ENCODE measurements at regions of chr5 and their contacts with region 1.

Region 1: DNA sequence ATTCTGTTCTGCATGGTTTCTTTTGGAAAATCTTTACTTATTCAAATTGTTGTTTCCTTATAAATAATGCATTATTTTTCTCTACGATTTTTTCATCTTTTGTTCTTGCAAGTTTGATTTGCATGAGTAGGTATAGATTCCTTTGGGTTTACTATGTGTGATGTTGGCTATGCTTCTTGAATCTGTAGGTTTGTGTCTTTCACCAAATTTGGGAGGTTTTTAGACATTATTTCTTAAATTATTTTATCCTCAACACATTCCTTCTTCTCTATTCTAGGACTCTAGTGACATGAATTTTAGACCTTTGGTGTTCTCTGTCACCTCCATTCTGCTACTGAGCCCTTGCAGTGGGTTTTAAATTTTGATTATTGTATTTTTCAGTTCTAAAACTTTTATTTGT is 219.0 kb downstream of the CWC27 start:
- DNase-seq: no peak
- ATAC-seq: no peak
- H3K4me3 ChIP-seq: no peak overlapping the region
- H3K4me3 Mint-ChIP-seq: no peak overlapping the region
- H3K27ac ChIP-seq: no peak overlapping the region
- H3K27ac Mint-ChIP-seq: no peak overlapping the region
- H3K4me1 ChIP-seq: peaks cover 0 to 3% of the 10 kb centered on the region in 2 experiments
- H3K4me1 Mint-ChIP-seq: peaks cover 0 to 9% (median 7%) of the 10 kb centered on the region in 3 donors
- H3K27me3 ChIP-seq: no peaks in the 10 kb centered on the region
- H3K27me3 Mint-ChIP-seq: no peaks in the 10 kb centered on the region

Region 2: DNA sequence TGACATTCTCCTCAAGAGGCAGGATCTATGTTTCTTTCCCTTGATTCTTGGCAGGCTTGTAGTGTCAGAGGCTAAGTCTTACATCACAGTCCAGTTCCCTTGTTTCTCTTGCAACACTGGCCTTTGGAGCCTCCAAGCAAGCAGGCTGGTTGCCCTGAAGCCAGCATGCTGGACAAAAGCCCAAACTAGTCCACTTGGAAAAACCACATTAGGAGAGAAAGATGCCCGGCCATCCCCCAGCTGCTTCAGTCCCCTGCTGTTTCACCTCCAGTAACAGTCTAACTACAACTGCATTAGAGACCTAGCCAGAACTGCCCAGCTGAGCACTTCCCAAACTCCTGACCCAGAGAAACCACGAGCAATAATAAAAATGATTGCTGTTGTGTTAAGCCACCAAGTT is 406.3 kb after region 1 on chr5:
- CTCF ChIA-PET with region 1: no interaction called
- POLR2A ChIA-PET with region 1: interaction called in 1 of 2 experiments, 10 read pairs
- DNase-seq: no peak
- ATAC-seq: no peak
- H3K4me3 ChIP-seq: no peak overlapping the region
- H3K4me3 Mint-ChIP-seq: no peak overlapping the region
- H3K27ac ChIP-seq: no peak overlapping the region
- H3K27ac Mint-ChIP-seq: no peak overlapping the region
- H3K4me1 ChIP-seq: no peaks in the 10 kb centered on the region
- H3K4me1 Mint-ChIP-seq: no peaks in the 10 kb centered on the region
- H3K27me3 ChIP-seq: no peaks in the 10 kb centered on the region
- H3K27me3 Mint-ChIP-seq: no peaks in the 10 kb centered on the region

Measured in T-cell (primary cell).